ENCODE measurements at regions of chr5 and their contacts with region 1.

Region 1: DNA sequence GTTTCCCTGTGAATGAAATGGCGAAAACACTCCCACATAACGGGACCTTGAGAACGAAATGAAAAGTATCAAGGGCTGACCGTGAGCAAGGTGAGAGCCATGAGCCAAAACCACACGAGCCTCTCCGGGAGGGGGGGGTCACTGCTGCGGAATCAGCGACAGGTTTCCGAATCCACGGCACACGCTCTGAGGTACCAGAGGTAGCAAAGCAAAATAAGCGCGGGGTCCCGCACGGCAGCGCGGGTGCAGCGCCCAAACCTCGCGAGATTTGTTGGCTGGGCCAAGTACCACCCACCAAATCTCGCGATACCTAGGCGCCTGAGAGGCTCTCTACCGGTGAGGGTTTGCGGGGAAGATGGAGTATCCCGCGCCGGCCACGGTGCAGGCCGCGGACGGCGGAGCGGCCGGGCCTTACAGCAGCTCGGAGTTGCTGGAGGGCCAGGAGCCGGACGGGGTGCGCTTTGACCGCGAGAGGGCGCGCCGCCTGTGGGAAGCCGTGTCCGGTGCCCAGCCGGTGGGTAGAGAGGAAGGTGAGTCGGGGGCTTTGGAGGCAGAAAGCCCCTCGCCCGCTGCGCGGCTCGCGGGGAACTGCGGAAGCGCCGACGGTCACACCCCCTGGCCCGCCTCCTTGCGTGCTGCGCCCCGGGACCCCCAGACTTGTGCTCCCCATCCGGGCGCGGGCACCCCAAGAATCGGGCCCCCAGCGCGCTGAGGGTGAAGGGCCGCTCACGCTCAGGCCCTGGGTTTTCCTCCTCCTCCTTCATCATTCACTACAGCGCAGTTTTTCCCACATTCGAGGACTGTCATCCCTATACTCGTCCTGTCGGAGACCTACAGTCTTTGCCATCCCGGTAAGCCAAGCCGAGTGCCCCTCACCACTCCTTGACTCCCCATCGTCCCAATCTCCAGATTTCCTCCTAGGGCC is at the start of gene ZNF346:
- DNase-seq: peak; percentile 97
- H3K4me3 Mint-ChIP-seq: peak within 1 kb of the TSS; percentile 95
- H3K27ac Mint-ChIP-seq: peak within 1 kb of the TSS; percentile 92
- H3K4me1 Mint-ChIP-seq: peaks cover 33% of the 10 kb centered on the region
- H3K27me3 Mint-ChIP-seq: no peaks in the 10 kb centered on the region
- total RNA-seq, gene ZNF346: 30.2 and 32.1 TPM in 2 replicates

Region 2: GRCh38 chr5:176596689-176597416 is 425.8 kb before region 1 on chr5:
- intact Hi-C with region 1: no loop called
- DNase-seq: peak; percentile 89
- H3K4me3 Mint-ChIP-seq: peak overlapping the region; percentile 79
- H3K27ac Mint-ChIP-seq: peak overlapping the region; percentile 78
- H3K4me1 Mint-ChIP-seq: peaks cover 10% of the 10 kb centered on the region
- H3K27me3 Mint-ChIP-seq: peaks cover 7% of the 10 kb centered on the region

Region 3: DNA sequence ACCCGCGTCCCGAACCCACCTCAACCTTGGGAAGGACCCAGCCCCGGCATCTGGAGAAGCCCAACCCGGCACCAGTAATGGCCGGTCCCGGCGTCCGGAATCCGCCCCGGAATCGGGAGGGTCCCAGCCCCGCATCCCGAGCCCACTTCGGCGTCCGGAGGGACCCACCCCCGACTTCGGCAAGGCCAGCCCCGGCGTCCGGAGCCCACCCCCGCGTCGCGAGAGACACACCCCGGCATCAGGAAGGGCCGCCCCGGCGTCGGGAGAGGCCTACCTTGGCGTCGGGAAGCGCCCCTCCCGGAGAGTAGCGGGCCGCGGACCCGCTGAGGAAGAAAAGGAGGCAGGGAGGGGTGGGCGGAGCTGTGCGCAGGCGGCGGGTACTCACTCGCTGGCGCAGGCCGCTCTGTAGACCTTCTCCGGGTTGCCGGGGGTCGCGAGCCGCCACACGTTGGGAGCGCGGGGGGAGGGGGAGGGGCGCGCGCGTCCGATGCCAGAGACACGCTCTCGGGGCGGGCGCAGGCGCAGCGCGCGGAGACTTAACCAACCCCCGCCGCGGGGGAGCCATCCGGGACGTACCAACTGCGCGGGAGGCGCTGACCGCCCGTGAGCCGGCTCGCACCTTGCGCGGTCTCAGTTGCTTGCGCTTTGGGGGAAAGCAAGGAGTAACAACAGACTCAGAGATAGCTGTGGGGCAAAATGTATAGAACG is 16.2 kb before region 1 on chr5 and contains the start of gene UIMC1:
- intact Hi-C with region 1: loop called (anchors 1 kb)
- DNase-seq: peak; percentile 98
- H3K4me3 Mint-ChIP-seq: peak within 1 kb of the TSS; percentile 96
- H3K27ac Mint-ChIP-seq: peak within 1 kb of the TSS; percentile 92
- H3K4me1 Mint-ChIP-seq: peaks cover 16% of the 10 kb centered on the region
- H3K27me3 Mint-ChIP-seq: no peaks in the 10 kb centered on the region
- total RNA-seq, gene UIMC1: 65.2 and 68.5 TPM in 2 replicates

Measured in activated CD4-positive, alpha-beta T cell treated with anti-CD3 and anti-CD28 coated beads, Interleukin-2, amount 10 ng/mL, durations not matched to agents 24 days and 14 days (primary cell).